Gastrocnemius medialis (tissue), 4 donors: ENCODE measurements at regions of chr1 and their contacts with region 1.

Region 1: GRCh38 chr1:6401673-6402072 is 8.1 kb upstream of the ACOT7 start:
- DNase-seq: no peak
- ATAC-seq: no peak
- H3K4me3 ChIP-seq: no peak overlapping the region
- H3K27ac ChIP-seq: no peak overlapping the region
- H3K4me1 ChIP-seq: no peaks in the 10 kb centered on the region
- H3K27me3 ChIP-seq: peaks cover 0 to 10% (median 0%) of the 10 kb centered on the region in 3 donors
- CTCF ChIP-seq: no peak
- POLR2A ChIP-seq: no peak

Region 2: DNA sequence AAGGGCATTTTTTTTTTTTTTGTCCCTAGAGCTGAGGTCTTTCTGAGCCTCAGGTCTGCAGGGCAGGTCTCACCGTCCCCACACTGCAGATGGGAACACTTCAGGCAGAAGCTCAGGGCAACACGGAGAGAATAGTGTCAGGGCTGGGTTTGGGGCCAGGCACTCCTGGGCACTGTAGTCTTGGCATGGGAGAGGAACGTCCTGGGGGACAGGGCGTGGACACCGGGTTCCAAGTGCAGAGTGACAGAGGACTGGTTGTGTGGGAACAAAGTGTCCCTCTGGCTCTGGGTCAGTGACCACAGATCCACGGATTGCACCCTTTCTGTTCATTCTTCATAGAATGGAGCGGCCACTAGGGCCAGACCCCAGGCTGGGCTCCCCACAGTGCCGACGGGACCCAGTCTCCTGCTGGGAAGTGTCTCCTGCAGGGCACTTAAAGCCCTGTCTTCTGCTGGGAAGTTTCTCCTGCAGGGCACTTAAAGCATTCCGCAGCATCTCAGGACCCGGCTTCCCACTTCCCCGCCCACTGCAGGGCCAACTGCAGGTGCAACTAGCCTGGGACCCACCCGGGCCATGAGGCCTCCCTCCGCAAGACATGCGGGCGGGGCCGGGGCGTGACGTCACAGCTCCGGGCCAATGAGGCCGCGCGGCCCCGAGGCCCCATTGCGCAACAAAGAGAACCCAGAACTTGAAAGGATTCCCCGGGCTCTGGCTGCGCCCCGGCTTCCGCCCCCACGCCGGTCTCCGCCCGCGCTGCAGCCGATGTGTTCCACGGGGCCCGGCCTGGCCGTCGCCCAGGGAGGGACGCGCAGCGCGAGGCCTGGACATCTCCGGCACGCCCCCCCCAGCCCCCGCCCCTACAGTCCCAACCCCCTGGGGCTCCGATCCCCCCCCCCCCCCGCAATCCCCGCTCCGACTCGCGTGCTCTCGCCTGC is 141.9 kb before region 1 on chr1:
- in situ Hi-C with region 1: loop called in 1 of 4 experiments (anchors 10 kb)
- intact Hi-C with region 1: no loop called
- DNase-seq: peak; percentile 50 to 59
- ATAC-seq: peak; percentile 50 to 63
- H3K4me3 ChIP-seq: peak overlapping the region; percentile 49 to 56 (median 54)
- H3K27ac ChIP-seq: peak overlapping the region in 3 of 4 donors; percentile 34 to 61 (median 49)
- H3K4me1 ChIP-seq: peaks cover 0 to 16% of the 10 kb centered on the region in 2 donors
- H3K27me3 ChIP-seq: peaks cover 30 to 51% (median 44%) of the 10 kb centered on the region in 3 donors
- CTCF ChIP-seq: peak in 1 of 5 experiments; percentile 10
- POLR2A ChIP-seq: no peak

Region 3: GRCh38 chr1:6343506-6344405 is 57.9 kb before region 1 on chr1:
- in situ Hi-C with region 1: no loop called
- intact Hi-C with region 1: loop called (anchors 2 kb)
- DNase-seq: peak in 1 of 2 donors; percentile 40
- ATAC-seq: peak; percentile 61 to 73
- H3K4me3 ChIP-seq: no peak overlapping the region
- H3K27ac ChIP-seq: no peak overlapping the region
- H3K4me1 ChIP-seq: no peaks in the 10 kb centered on the region
- H3K27me3 ChIP-seq: no peaks in the 10 kb centered on the region
- CTCF ChIP-seq: peak; percentile 35 to 82 (median 72)
- POLR2A ChIP-seq: no peak

Region 4: DNA sequence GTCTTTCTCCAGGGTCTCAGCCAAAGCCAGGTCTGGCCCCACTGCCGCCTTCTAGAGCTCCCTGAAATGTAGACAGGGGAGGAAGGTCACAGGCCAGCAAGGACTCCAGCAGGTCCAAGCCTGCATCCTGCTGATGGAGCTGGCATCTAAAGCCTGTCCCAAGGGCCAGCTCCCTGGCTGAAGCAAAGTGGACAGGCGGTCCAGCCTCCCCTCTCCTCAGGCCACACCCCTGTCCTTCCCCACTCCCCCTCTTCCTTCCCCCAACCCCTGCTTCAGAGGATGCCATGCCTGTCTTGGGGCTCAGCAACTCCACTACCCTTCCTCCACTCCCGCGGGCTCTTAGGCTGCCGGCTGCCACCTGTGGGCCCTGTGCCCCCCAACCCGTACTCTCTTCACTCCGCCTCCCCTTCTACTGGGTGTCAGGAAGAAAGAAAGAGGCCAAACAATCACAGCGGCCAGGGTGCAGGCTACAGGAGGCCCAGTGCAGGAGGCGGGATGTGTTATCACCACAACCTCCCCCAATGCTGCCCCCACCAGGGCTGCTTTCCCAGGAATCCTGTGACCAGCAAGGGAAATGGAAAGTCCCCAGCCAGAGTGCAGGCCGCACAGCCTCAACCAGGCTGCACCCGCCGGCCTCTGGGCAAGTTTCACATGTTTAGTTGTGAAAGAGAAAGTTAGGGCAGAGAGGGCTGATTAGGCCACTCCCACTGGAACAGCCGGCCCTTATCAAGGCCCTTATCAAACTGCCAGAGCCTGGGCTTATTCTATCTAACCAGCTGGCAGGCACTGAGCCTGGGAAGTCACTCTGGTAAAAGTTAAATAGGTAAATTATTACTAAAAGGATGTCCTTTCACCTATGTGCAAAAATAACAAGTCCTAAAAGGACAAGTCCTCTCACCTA is 42.2 kb before region 1 on chr1:
- in situ Hi-C with region 1: loop called (anchors 5 to 10 kb)
- intact Hi-C with region 1: loop called (anchors 1 kb)
- DNase-seq: no peak
- ATAC-seq: peak in 1 of 2 donors; percentile 27
- H3K4me3 ChIP-seq: no peak overlapping the region
- H3K27ac ChIP-seq: peak overlapping the region in 3 of 4 donors; percentile 42 to 64 (median 60)
- H3K4me1 ChIP-seq: peaks cover under 1 to 9% of the 10 kb centered on the region in 2 donors
- H3K27me3 ChIP-seq: no peaks in the 10 kb centered on the region
- CTCF ChIP-seq: no peak
- POLR2A ChIP-seq: no peak